ENCODE measurements at regions of chr11 and their contacts with region 1.

Region 1: DNA sequence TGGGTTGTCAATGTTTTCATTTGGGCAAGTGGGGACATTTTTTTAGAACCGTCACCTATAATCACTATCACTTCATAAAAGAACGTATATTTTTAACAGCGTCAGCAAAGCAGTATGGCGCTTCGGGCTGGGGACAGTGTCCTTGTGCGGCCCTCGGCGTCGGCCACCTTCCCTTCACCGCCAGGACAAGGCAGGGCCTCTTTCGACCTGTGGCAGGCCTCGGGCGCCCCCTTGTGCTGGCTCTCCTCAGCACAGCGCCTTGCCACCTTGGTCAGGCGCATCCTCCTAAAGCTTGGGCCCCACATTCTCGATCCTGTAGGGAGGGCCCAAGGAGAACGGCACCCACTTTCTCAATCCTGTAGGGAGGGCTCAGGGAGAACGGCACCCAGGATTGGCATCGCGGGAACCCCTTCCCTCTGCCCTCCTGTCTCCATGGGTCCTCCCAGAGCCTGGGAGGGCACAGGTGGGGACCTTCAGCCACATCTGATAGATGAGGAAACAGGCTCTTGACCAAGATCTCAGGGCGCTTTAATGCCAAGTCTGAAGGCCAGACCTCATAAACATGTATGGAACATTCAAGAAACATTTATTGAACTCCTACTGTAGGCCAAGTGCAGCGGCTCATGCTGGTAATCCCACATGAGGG is 11.5 kb upstream of the FADD start:
- DNase-seq: peak; percentile 78 to 89 (median 84)
- ATAC-seq: peak; percentile 99
- H3K4me3 ChIP-seq: no peak overlapping the region
- H3K27ac ChIP-seq: no peak overlapping the region
- H3K4me1 ChIP-seq: peaks cover 0 to 8% of the 10 kb centered on the region in 2 experiments; a peak in 1 of 5 replicates
- H3K27me3 ChIP-seq: peaks cover 11 to 38% of the 10 kb centered on the region in 2 experiments; a peak in 4 of 5 replicates
- CTCF ChIP-seq: peak; percentile 89 to 96 (median 93)
- EP300 ChIP-seq: no peak
- POLR2A ChIP-seq: no peak
- RAD21 ChIP-seq: peak; percentile 89 to 97

Region 2: DNA sequence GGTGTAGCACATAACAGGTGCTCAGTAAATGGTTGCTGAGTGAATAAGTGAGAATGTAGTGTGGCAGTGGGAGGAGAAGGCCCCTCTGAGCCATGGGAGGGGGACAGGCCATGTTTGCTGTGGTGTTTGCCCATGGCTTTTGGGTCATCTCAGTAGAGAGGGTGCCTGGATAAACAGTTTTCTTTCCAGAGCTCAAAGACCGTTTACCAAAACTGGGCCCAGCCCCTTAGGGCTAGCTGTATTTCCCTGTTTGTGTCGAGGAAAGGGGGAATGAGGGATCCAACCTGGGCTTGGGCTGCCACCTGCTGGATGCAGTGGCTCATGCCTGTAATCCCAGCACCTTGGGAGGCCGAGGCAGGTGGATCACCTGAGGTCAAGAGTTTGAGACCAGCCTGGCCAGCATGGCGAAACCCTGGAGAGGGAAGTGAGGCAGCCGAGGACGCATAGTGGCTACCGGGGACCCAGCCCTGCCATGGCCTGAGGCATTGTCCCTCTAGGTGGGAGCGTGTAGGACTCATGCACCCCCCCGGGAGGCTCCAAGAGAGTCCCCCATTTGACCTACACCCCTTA is 507.8 kb before region 1 on chr11:
- CTCF ChIA-PET with region 1: interaction called, 5 read pairs
- POLR2A ChIA-PET with region 1: no interaction called
- in situ Hi-C with region 1: no loop called
- intact Hi-C with region 1: loop called (anchors 5 kb)
- DNase-seq: peak in 3 of 4 experiments; percentile 38 to 54 (median 44)
- ATAC-seq: peak; percentile 76
- H3K4me3 ChIP-seq: no peak overlapping the region
- H3K27ac ChIP-seq: no peak overlapping the region; the same call in 2 of the 3 replicates
- H3K4me1 ChIP-seq: peaks cover 0 to 13% of the 10 kb centered on the region in 2 experiments; a peak in 3 of 5 replicates
- H3K27me3 ChIP-seq: no peaks in the 10 kb centered on the region
- CTCF ChIP-seq: peak; percentile 56 to 73 (median 61)
- EP300 ChIP-seq: no peak
- POLR2A ChIP-seq: no peak
- RAD21 ChIP-seq: peak; percentile 31 to 79; a peak in 2 of 4 replicates

Region 3: DNA sequence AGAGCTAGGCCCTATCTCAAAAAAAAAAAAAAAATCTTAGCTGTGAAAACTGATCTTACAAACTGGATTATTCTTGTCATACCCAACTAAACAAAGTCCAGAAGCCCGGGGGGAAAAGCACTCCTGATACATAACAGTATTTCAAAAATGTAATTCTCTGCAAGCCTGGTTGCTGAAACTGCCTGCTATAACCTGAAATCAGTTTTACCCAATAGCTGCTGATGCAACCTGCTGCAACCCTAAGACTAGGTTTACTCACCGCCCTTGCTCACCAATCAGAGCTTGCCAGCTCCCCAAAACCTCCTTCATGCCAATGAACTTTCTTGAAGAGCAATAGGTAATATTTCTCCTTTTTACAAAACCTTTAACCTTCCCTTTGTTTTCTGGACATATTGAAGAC is 500.2 kb before region 1 on chr11:
- CTCF ChIA-PET with region 1: no interaction called
- POLR2A ChIA-PET with region 1: no interaction called
- in situ Hi-C with region 1: loop called (anchors 5 kb)
- intact Hi-C with region 1: loop called (anchors 5 kb)
- DNase-seq: peak in 1 of 4 experiments; percentile 31
- ATAC-seq: peak; percentile 64
- H3K4me3 ChIP-seq: no peak overlapping the region
- H3K27ac ChIP-seq: no peak overlapping the region
- H3K4me1 ChIP-seq: peaks cover 3 to 5% of the 10 kb centered on the region in 2 experiments; a peak in 4 of 5 replicates
- H3K27me3 ChIP-seq: peaks cover 15% of the 10 kb centered on the region in 2 experiments
- CTCF ChIP-seq: no peak
- EP300 ChIP-seq: peak; percentile 87
- POLR2A ChIP-seq: no peak
- RAD21 ChIP-seq: no peak

Region 4: DNA sequence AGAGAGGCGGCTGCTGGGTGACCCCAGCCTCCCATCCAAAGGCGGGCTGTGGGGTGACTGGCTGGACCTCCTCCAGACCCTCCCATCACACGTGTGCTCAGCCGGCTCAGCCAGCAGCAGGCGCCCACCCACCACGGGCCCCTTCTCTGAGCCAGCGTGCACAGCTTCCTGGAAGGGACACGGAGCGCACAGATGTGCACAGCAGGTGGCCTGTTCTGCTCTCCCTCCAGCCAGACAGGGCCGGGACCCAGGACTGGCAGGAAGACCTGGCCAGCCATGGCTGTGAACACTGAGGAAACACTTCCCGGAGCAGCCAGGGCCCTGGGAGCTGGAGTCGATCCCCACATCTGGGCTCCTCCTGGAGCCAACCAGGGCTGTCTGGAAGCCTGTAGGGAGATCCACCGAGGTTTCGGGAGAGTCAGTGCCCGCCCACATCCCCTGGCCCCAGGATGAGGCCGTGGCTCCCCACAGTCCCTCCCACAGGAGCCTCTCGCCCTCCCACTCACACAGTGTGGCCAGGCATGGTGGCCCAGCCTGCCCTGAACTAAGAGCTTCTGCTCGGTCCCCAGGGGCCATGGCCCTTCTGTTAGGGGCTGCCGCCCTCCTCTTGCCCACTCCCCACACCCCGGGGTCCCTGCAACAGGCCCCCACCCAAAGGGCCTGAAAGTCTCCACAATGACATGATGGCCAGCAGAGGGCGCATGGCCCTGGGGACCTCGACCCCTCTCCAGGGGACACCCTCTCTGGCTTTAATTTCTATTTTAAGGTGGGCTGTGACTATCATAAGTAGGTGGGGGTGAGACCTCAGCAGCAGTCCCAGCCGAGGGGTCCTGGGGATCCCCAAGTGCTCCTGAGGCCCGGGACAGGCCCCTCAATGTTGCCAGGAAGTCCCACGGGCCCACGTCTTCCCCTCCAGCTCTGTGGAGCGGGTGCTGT is 281.8 kb before region 1 on chr11:
- CTCF ChIA-PET with region 1: interaction called, 16 read pairs
- POLR2A ChIA-PET with region 1: interaction called, 3 read pairs
- in situ Hi-C with region 1: loop called (anchors 5 kb)
- intact Hi-C with region 1: loop called (anchors 2 kb)
- DNase-seq: peak; percentile 47 to 65 (median 58)
- ATAC-seq: peak; percentile 45; the same call in 2 of the 3 replicates
- H3K4me3 ChIP-seq: no peak overlapping the region
- H3K27ac ChIP-seq: no peak overlapping the region
- H3K4me1 ChIP-seq: peaks cover 14 to 60% of the 10 kb centered on the region in 2 experiments; a peak in 4 of 5 replicates
- H3K27me3 ChIP-seq: peaks cover 5 to 46% of the 10 kb centered on the region in 2 experiments; a peak in 4 of 5 replicates
- CTCF ChIP-seq: peak; percentile 57 to 83 (median 58)
- EP300 ChIP-seq: no peak
- POLR2A ChIP-seq: no peak
- RAD21 ChIP-seq: peak in 1 of 2 experiments; percentile 22; a peak in 1 of 4 replicates

Region 5: GRCh38 chr11:69918938-69919650 is 272.5 kb before region 1 on chr11:
- CTCF ChIA-PET with region 1: interaction called, 16 read pairs
- POLR2A ChIA-PET with region 1: no interaction called
- in situ Hi-C with region 1: loop called (anchors 5 kb)
- intact Hi-C with region 1: loop called (anchors 1 kb)
- DNase-seq: peak; percentile 79 to 87 (median 82)
- ATAC-seq: peak; percentile 92
- H3K4me3 ChIP-seq: no peak overlapping the region
- H3K27ac ChIP-seq: no peak overlapping the region
- H3K4me1 ChIP-seq: peaks cover 0 to 43% of the 10 kb centered on the region in 2 experiments; a peak in 2 of 5 replicates
- H3K27me3 ChIP-seq: peaks cover 12 to 48% of the 10 kb centered on the region in 2 experiments; a peak in 4 of 5 replicates
- CTCF ChIP-seq: peak; percentile 88 to 91 (median 90)
- EP300 ChIP-seq: 0 out of 2 replicates have a peak, but pooled peaks have one; percentile 7
- POLR2A ChIP-seq: no peak
- RAD21 ChIP-seq: peak; percentile 84 to 93

Region 6: DNA sequence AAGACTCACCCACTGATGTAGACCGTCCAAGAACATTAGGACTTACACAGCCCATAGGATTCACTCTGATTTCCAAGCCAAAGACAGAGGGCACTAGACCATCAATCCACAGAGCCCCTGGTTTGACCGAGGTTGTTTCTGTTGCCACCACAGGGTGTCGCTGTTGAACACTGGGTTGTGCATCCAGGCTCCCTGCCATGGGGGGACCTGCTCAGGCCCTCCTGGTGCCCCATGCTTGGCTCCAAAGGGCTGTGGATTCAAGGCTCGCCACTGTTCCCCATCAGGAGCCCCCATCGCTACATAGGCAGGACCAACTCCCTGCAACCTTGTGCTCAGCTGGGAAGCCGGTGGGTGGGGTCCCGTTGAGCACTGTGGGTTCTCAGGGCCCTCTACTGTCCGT is 241.5 kb before region 1 on chr11:
- CTCF ChIA-PET with region 1: interaction called, 7 read pairs
- POLR2A ChIA-PET with region 1: interaction called, 3 read pairs
- in situ Hi-C with region 1: no loop called
- intact Hi-C with region 1: loop called (anchors 1 kb)
- DNase-seq: peak; percentile 81 to 88 (median 86)
- ATAC-seq: peak; percentile 83
- H3K4me3 ChIP-seq: no peak overlapping the region
- H3K27ac ChIP-seq: peak overlapping the region; percentile 13; the same call in 1 of the 3 replicates
- H3K4me1 ChIP-seq: peaks cover 42 to 68% of the 10 kb centered on the region in 2 experiments
- H3K27me3 ChIP-seq: no peaks in the 10 kb centered on the region
- CTCF ChIP-seq: peak; percentile 97 to 99 (median 99)
- EP300 ChIP-seq: no peak
- POLR2A ChIP-seq: no peak
- RAD21 ChIP-seq: peak; percentile 66 to 95

Region 7: DNA sequence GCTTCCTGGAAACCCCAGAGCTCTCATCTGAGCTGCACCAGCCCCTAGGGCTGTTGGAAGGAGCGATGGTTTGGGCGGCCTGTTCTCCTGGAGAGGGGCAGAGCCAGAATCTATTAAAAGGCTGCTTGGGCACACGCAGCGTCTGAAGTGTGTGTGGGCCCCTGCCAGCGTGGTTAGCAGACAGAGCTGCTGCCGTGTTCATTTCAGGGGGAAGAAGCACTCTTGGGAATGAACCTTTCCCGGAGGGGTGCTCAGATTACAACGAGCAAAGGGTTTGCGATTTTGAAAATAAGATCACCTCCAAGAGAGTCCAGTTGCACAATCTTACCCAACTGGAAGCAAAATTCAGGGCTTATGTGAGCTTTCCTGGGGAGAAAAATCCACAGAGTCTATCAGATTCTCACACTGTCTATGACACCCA is 100.6 kb before region 1 on chr11:
- CTCF ChIA-PET with region 1: no interaction called
- POLR2A ChIA-PET with region 1: no interaction called
- in situ Hi-C with region 1: no loop called
- intact Hi-C with region 1: loop called (anchors 5 kb)
- DNase-seq: no peak
- ATAC-seq: no peak
- H3K4me3 ChIP-seq: no peak overlapping the region
- H3K27ac ChIP-seq: no peak overlapping the region
- H3K4me1 ChIP-seq: peaks cover 0 to 6% of the 10 kb centered on the region in 2 experiments; a peak in 2 of 5 replicates
- H3K27me3 ChIP-seq: peaks cover 35 to 79% of the 10 kb centered on the region in 2 experiments
- CTCF ChIP-seq: no peak
- EP300 ChIP-seq: no peak
- POLR2A ChIP-seq: no peak
- RAD21 ChIP-seq: no peak

Region 8: DNA sequence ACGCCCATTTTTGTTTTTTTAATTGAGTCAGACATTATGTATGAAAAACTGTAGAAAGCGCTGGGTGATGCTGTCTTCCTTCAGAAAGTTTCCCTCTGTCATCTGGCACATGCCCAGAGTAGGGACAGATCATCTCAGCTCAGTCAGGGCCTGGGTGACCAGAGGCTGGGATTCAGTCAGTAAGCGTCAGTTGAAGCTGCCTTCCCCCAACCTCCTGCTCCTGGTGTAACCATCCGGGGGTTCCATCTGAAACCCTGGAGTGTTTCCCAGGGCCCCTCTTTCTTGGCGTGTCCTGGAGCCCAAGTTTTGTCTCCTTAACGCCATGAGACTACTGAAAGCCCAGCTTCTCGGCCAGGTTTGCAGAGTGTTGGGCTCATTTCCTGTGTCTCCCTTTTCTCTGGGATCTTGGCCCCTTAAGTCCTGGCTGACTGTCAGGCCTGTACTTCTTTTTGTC is 89.6 kb after region 1 on chr11:
- CTCF ChIA-PET with region 1: no interaction called
- POLR2A ChIA-PET with region 1: no interaction called
- in situ Hi-C with region 1: no loop called
- intact Hi-C with region 1: no loop called
- DNase-seq: no peak
- ATAC-seq: no peak
- H3K4me3 ChIP-seq: no peak overlapping the region
- H3K27ac ChIP-seq: no peak overlapping the region
- H3K4me1 ChIP-seq: no peaks in the 10 kb centered on the region
- H3K27me3 ChIP-seq: no peaks in the 10 kb centered on the region
- CTCF ChIP-seq: no peak
- EP300 ChIP-seq: no peak
- POLR2A ChIP-seq: no peak
- RAD21 ChIP-seq: no peak

Measured in K562 (cell line).